ENCODE measurements at regions of chr17 and their contacts with region 1.

Region 1: DNA sequence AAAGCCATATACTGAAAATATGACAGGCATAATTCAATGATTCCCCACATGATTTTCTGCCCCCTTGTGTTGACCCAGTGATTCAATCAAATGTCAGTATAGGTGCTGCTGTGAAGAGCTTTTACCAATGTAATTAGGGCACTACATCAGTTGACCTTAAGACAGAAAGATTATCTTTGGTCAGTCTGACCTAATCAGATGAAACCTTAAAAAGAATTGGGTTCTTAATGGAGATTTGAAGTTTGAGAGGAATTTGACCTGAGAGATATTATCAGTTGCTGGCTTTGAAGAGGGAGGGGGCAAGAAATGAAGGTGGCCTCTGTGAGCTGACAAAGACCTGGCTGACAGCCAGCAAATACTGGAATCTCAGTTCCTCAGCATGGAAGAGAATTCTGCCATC is 358.7 kb upstream of the CA10 start:
- DNase-seq: no peak
- H3K4me3 ChIP-seq: no peak overlapping the region
- H3K27ac ChIP-seq: no peak overlapping the region
- H3K4me1 ChIP-seq: no peaks in the 10 kb centered on the region
- H3K27me3 ChIP-seq: no peaks in the 10 kb centered on the region
- CTCF ChIP-seq: no peak
- EP300 ChIP-seq: no peak
- POLR2A ChIP-seq: no peak

Region 2: GRCh38 chr17:50893183-50893993 is 1623.8 kb before region 1 on chr17:
- in situ Hi-C with region 1: no loop called
- intact Hi-C with region 1: no loop called
- DNase-seq: peak; percentile 46
- H3K4me3 ChIP-seq: no peak overlapping the region
- H3K27ac ChIP-seq: peak overlapping the region; percentile 57 to 66 (median 63)
- H3K4me1 ChIP-seq: peaks cover 0 to 33% (median 7%) of the 10 kb centered on the region in 4 donors
- H3K27me3 ChIP-seq: no peaks in the 10 kb centered on the region
- CTCF ChIP-seq: no peak
- EP300 ChIP-seq: no peak
- POLR2A ChIP-seq: no peak

Region 3: GRCh38 chr17:52482271-52482670 is 34.9 kb before region 1 on chr17:
- in situ Hi-C with region 1: no loop called
- intact Hi-C with region 1: loop called (anchors 5 kb)
- DNase-seq: no peak
- H3K4me3 ChIP-seq: no peak overlapping the region
- H3K27ac ChIP-seq: no peak overlapping the region
- H3K4me1 ChIP-seq: peaks cover 0 to 5% (median 2%) of the 10 kb centered on the region in 4 donors
- H3K27me3 ChIP-seq: no peaks in the 10 kb centered on the region
- CTCF ChIP-seq: no peak
- EP300 ChIP-seq: no peak
- POLR2A ChIP-seq: no peak